ENCODE measurements at regions of chr7 and their contacts with region 1.

Region 1: DNA sequence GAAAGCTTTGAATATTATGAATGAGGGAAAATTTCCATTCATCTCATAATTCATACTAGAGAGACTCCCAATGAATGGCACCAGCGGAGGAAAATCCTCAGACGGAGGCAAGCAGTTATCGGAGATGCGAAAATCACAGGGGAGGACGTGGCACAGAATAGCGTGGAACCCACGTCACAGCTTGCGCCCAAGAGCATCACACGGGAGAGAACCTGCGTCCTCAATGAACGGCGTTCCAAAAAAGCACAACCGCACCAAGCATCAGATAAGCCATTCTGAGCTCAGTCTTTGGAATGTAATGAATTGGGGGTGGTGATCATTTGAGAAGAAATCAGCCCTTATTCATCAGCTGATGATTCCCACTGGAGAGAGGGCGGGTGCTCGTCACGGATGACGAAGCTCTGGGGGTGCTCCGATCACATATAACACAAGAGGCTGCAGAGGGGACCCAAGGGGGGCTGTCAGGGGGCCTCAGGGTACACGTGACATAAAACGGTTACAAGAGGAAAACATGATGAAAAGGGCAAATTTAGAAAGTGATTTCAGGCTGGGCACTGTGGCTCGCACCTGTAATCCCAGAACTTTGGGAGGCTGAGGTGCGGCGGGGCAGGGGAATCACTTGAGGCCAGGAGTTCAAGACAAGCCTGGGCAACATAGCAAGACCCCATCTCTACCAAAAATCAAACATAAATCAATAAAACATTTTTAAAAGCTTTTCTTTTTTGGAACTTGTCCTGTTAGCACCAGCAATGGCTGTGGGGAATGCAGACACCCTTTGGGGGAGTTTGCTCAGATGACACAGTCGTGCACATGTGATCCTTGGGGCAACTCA is 33.8 kb upstream of the FIS1 start:
- DNase-seq: no peak
- H3K4me3 ChIP-seq: no peak overlapping the region
- H3K27ac ChIP-seq: no peak overlapping the region
- H3K4me1 ChIP-seq: peaks cover 0 to 5% (median 0%) of the 10 kb centered on the region in 4 experiments; a peak in 3 of 7 replicates
- H3K27me3 ChIP-seq: no peaks in the 10 kb centered on the region
- CTCF ChIP-seq: no peak
- EP300 ChIP-seq: no peak
- POLR2A ChIP-seq: no peak; a peak in 1 of 3 replicates
- RAD21 ChIP-seq: no peak

Region 2: GRCh38 chr7:101235050-101235449 is 43.6 kb before region 1 on chr7:
- CTCF ChIA-PET with region 1: interaction called, 51 read pairs
- POLR2A ChIA-PET with region 1: interaction called, 12 read pairs
- DNase-seq: peak in 1 of 2 experiments; percentile 63
- H3K4me3 ChIP-seq: no peak overlapping the region
- H3K27ac ChIP-seq: no peak overlapping the region
- H3K4me1 ChIP-seq: peaks cover 0 to 24% (median 12%) of the 10 kb centered on the region in 4 experiments; a peak in 6 of 7 replicates
- H3K27me3 ChIP-seq: no peaks in the 10 kb centered on the region
- CTCF ChIP-seq: peak in 2 of 3 experiments; percentile 73; a peak in 3 of 4 replicates
- EP300 ChIP-seq: no peak
- POLR2A ChIP-seq: no peak
- RAD21 ChIP-seq: peak; percentile 69 to 78

Region 3: GRCh38 chr7:101664436-101664835 is 385.8 kb after region 1 on chr7:
- CTCF ChIA-PET with region 1: no interaction called
- POLR2A ChIA-PET with region 1: no interaction called
- DNase-seq: peak; percentile 66 to 70
- H3K4me3 ChIP-seq: peak overlapping the region in 1 of 4 experiments; percentile 25; a peak in 1 of 8 replicates
- H3K27ac ChIP-seq: no peak overlapping the region
- H3K4me1 ChIP-seq: peaks cover 0 to 13% (median 7%) of the 10 kb centered on the region in 4 experiments; a peak in 6 of 7 replicates
- H3K27me3 ChIP-seq: no peaks in the 10 kb centered on the region
- CTCF ChIP-seq: no peak
- EP300 ChIP-seq: no peak
- POLR2A ChIP-seq: no peak
- RAD21 ChIP-seq: no peak